Gastrocnemius medialis (tissue), 4 donors: ENCODE measurements at regions of chr3 and their contacts with region 1.

Region 1: GRCh38 chr3:47475570-47476329 is at the start of gene SCAP:
- DNase-seq: peak; percentile 89 to 92
- ATAC-seq: peak; percentile 94 to 95
- H3K4me3 ChIP-seq: peak within 1 kb of the TSS; percentile 74 to 100 (median 90)
- H3K27ac ChIP-seq: peak within 1 kb of the TSS; percentile 77 to 95 (median 90)
- H3K4me1 ChIP-seq: peaks cover 22 to 27% of the 10 kb centered on the region in 2 donors
- H3K27me3 ChIP-seq: no peaks in the 10 kb centered on the region
- CTCF ChIP-seq: peak; percentile 92 to 100 (median 96)
- POLR2A ChIP-seq: peak; percentile 66 to 79
- total RNA-seq, gene SCAP: 38.2 to 48.1 (median 42.8) TPM

Region 2: DNA sequence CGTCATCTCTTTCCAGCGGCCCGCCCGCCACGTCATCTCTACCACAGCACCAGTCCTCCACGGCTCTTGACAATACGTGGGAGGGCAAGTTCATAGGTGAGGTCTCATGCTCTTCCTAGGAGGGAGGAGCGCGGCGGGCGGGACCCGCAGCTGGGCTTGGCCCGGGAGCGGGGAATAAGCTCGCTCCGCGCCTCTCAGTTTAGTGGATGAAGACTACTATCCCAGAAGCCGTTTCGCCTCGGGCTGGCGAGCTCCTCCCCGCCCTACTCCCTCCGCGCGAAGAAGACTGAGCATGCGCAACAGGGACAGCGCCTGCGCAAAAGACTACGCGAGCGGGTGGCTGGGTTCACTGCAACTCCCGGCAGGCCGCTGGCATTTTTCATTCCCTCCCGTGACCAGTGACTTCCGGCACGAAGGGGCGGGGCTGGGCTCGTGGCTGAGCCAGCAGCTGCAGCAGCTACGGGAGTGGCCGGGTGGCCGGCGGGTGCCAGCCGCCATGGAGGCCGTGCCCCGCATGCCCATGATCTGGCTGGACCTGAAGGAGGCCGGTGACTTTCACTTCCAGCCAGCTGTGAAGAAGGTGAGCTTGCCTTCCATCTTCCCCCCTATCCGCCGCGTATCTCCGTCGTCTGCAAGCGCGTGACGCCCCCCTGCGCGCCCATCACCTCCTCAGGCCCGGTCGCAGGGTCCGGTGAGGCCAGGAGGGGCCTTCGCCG is 95.0 kb before region 1 on chr3 and contains the start of gene PTPN23:
- in situ Hi-C with region 1: no loop called
- intact Hi-C with region 1: loop called (anchors 1 kb)
- DNase-seq: peak; percentile 99
- ATAC-seq: peak; percentile 94 to 96
- H3K4me3 ChIP-seq: peak within 1 kb of the TSS; percentile 85 to 100 (median 94)
- H3K27ac ChIP-seq: peak within 1 kb of the TSS; percentile 96 to 100 (median 97)
- H3K4me1 ChIP-seq: peaks cover 39 to 46% of the 10 kb centered on the region in 2 donors
- H3K27me3 ChIP-seq: no peaks in the 10 kb centered on the region
- CTCF ChIP-seq: peak in 1 of 5 experiments; percentile 12
- POLR2A ChIP-seq: peak; percentile 97 to 99
- total RNA-seq, gene PTPN23: 10.5 to 37.3 (median 23.7) TPM

Region 3: GRCh38 chr3:47420511-47421484 is 55.0 kb before region 1 on chr3:
- in situ Hi-C with region 1: loop called (anchors 5 to 10 kb)
- intact Hi-C with region 1: loop called (anchors 1 kb)
- DNase-seq: peak; percentile 58 to 83
- ATAC-seq: peak; percentile 79 to 87
- H3K4me3 ChIP-seq: no peak overlapping the region
- H3K27ac ChIP-seq: peak overlapping the region; percentile 41 to 78 (median 62)
- H3K4me1 ChIP-seq: peaks cover 10% of the 10 kb centered on the region in 2 donors
- H3K27me3 ChIP-seq: no peaks in the 10 kb centered on the region
- CTCF ChIP-seq: peak; percentile 86 to 94 (median 91)
- POLR2A ChIP-seq: no peak

Region 4: GRCh38 chr3:47443611-47443995 is 32.1 kb before region 1 on chr3:
- in situ Hi-C with region 1: no loop called
- intact Hi-C with region 1: loop called (anchors 1 kb)
- DNase-seq: no peak
- ATAC-seq: peak; percentile 21 to 36
- H3K4me3 ChIP-seq: peak overlapping the region in 1 of 4 donors; percentile 2
- H3K27ac ChIP-seq: peak overlapping the region; percentile 74 to 91 (median 84)
- H3K4me1 ChIP-seq: peaks cover 24 to 40% of the 10 kb centered on the region in 2 donors
- H3K27me3 ChIP-seq: no peaks in the 10 kb centered on the region
- CTCF ChIP-seq: no peak
- POLR2A ChIP-seq: no peak

Region 5: DNA sequence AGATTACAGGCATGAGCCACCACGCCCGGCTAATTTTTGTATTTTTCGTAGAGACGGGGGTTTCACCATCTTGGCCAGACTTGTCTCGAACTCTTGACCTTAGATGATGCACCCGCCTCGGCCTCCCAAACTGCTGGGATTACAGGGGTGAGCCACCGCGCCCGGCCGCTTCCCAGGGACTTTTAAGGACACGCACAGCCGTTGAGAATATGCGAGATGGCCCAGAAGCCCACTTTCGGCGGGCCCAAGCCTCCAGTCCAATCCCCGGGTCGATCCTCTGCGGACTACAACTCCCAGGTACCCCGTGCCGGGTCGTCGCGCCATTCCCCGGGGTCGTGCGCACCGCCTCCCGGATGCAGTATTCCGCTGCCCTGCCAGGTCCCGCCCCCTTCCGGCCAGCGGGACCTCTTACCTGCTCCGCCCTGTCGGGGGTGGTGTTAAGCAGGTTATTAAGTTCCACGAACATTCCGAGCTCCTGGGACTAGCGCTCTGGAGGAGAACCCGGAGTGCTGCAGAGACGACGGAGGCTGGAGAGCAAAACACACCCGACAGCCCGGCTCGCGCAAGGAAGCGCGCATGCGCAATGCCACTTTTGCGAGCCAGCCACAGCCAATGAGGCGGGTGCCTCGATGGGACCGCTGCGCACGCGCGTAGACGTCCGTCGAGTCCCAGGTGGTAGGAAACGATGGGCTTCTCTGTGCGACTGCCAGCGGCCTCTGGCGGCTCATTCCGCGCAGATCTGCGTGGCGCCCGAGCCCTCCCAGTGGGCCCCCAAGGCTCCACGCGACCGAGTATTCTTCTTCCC is 37.6 kb after region 1 on chr3 and contains the start of gene ELP6:
- in situ Hi-C with region 1: no loop called
- intact Hi-C with region 1: loop called (anchors 1 kb)
- DNase-seq: peak; percentile 94 to 96
- ATAC-seq: peak; percentile 97
- H3K4me3 ChIP-seq: peak within 1 kb of the TSS; percentile 59 to 93 (median 78)
- H3K27ac ChIP-seq: peak within 1 kb of the TSS; percentile 84 to 98 (median 94)
- H3K4me1 ChIP-seq: peaks cover 0 to 5% of the 10 kb centered on the region in 2 donors
- H3K27me3 ChIP-seq: no peaks in the 10 kb centered on the region
- CTCF ChIP-seq: peak in 3 of 5 experiments; percentile 32 to 43 (median 34)
- POLR2A ChIP-seq: peak; percentile 47 to 63
- total RNA-seq, gene ELP6: 16.9 to 31.1 (median 26.6) TPM

Region 6: GRCh38 chr3:47605652-47606051 is 129.9 kb after region 1 on chr3:
- in situ Hi-C with region 1: no loop called
- intact Hi-C with region 1: no loop called
- DNase-seq: no peak
- ATAC-seq: no peak
- H3K4me3 ChIP-seq: no peak overlapping the region
- H3K27ac ChIP-seq: no peak overlapping the region
- H3K4me1 ChIP-seq: peaks cover 8 to 14% of the 10 kb centered on the region in 2 donors
- H3K27me3 ChIP-seq: no peaks in the 10 kb centered on the region
- CTCF ChIP-seq: no peak
- POLR2A ChIP-seq: no peak